GM10248 (cell line): ENCODE measurements at regions of chr16 and their contacts with region 1.

Region 1: DNA sequence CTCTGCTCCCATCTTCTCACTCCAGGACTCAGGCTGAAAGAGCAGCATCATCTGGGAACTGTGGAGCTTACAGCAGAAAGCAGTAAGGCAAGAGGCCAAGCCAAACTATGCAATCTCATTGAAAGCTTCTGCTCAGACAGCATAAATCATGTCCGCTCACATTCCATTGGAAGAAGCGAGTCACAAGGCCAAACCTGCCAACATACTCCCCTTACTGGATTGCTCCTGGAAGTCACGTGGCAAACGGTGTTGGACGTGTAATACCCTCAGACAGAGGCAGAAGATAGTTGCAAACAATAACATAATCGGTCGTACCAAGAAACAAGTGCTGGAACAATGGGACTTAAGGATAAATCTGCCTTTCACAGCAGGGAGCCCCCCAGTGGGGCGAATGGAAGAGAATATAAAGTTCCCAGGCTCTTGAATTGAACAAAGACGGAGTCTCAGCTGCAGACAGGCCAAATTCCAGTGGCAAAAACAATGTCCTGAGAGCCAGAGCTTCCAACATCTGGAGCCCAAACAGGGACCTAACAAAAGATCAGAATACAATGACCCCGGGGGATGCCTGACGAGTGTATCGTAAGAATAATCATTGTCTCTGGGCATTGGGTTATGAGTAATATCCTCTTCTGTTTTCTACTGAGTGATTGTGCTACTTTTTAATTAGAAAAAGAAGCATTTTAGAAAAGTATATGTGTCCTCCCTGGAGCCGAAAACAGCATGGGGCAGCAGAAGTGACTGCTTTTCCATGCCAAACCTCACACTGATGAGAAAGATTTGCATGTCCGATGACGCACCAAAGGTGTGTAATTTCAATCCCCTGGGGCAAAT is 68.4 kb downstream of the CMC2 start:
- DNase-seq: no peak
- CTCF ChIP-seq: no peak

Region 2: GRCh38 chr16:80883159-80883642 is 55.0 kb before region 1 on chr16:
- CTCF ChIA-PET with region 1: no interaction called
- POLR2A ChIA-PET with region 1: no interaction called
- DNase-seq: no peak
- CTCF ChIP-seq: no peak

Region 3: DNA sequence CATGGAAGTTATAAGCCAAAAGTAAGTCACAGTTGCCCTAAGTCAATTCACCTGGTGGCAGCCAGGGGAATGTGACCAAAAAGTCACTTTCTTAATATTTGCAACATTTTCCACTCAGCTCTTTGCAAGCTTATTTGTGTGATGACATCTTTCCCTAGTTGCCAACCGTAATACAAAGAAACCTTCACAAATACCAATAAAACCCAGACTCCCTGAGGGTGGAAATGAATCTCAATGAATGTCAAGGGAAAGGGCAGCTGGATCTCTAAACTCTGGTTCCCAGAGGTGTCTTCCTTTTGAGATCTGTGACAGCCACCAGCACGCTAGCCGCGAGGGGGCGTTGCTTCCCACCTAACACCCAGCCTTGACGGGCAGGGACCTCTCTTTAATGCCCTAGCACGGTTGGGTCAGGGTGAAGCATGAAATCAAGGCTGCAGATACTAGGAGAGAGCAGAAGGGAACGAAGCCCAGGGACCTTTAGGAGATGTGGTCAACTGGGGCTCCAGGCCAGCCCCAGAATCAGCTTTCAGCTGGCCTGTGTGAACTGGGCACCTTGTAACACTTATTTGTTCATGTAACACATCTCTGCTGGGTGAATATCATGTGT is 13.8 kb before region 1 on chr16:
- CTCF ChIA-PET with region 1: interaction called, 14 read pairs
- POLR2A ChIA-PET with region 1: no interaction called
- DNase-seq: peak; percentile 65
- CTCF ChIP-seq: peak; percentile 74

Region 4: DNA sequence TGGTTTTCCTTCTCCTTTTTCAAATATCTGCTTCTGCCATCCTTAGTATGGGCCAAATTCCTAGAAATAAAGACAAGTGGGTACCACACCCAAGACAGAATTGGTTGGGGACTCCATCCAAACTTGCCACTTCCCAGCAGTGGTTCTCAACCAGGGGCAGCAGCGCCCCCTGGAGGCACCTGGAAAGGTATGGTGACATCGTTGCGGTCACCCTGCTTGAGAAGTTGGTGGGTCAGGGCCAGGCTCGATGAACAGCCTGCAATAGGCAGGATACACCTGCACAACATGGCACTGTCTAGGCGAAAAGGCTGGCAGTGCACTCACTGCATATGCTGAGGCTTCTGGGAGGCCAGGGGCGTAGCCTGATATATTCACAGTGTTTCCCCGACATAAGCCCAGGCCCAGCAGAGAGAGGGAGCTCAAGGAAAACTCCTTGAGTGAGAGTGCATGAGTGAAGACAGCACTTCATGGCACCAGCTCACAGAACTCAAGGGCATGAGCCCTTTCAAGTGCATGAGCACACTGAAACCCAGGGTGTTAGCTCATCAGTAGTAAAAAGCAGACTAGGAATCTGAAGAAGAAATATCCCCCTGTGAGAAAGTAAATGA is 10.7 kb after region 1 on chr16:
- CTCF ChIA-PET with region 1: interaction called, 13 read pairs
- POLR2A ChIA-PET with region 1: no interaction called
- DNase-seq: peak; percentile 53
- CTCF ChIP-seq: peak; percentile 73

Region 5: DNA sequence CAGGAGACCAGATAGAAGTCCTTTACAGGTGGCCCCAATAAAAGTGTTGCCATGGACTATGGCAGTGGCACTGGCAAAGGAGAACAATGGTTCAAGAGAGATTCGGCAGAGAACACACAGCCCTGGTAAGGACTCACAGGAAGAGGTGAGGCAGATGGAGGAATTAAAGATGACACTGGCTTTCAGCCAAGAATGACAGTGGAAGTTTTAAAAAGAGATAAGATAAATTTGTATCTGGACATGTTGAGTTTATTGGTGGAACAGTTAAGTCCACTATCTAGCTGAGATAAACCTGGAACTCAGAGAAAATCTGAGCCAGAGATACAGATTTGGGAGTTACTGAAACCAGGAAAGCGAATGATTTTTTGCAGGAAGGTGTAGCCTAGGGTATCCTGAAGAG is 48.3 kb after region 1 on chr16:
- CTCF ChIA-PET with region 1: no interaction called
- POLR2A ChIA-PET with region 1: no interaction called
- DNase-seq: no peak
- CTCF ChIP-seq: no peak